HCT116 (cell line): ENCODE measurements at regions of chr7 and their contacts with region 1.

Region 1: GRCh38 chr7:134089446-134089845 is 37.7 kb upstream of the LRGUK start:
- DNase-seq: no peak
- ATAC-seq: no peak
- H3K4me3 ChIP-seq: no peak overlapping the region
- H3K27ac ChIP-seq: no peak overlapping the region
- H3K4me1 ChIP-seq: no peaks in the 10 kb centered on the region
- H3K27me3 ChIP-seq: no peaks in the 10 kb centered on the region
- CTCF ChIP-seq: no peak
- POLR2A ChIP-seq: no peak
- RAD21 ChIP-seq: no peak

Region 2: GRCh38 chr7:134071355-134072331 is 17.8 kb before region 1 on chr7:
- CTCF ChIA-PET with region 1: no interaction called
- POLR2A ChIA-PET with region 1: no interaction called
- RAD21 ChIA-PET with region 1: no interaction called
- intact Hi-C with region 1: no loop called
- DNase-seq: no peak
- ATAC-seq: no peak
- H3K4me3 ChIP-seq: no peak overlapping the region
- H3K27ac ChIP-seq: no peak overlapping the region
- H3K4me1 ChIP-seq: no peaks in the 10 kb centered on the region
- H3K27me3 ChIP-seq: no peaks in the 10 kb centered on the region
- CTCF ChIP-seq: no peak
- POLR2A ChIP-seq: no peak
- RAD21 ChIP-seq: no peak

Region 3: DNA sequence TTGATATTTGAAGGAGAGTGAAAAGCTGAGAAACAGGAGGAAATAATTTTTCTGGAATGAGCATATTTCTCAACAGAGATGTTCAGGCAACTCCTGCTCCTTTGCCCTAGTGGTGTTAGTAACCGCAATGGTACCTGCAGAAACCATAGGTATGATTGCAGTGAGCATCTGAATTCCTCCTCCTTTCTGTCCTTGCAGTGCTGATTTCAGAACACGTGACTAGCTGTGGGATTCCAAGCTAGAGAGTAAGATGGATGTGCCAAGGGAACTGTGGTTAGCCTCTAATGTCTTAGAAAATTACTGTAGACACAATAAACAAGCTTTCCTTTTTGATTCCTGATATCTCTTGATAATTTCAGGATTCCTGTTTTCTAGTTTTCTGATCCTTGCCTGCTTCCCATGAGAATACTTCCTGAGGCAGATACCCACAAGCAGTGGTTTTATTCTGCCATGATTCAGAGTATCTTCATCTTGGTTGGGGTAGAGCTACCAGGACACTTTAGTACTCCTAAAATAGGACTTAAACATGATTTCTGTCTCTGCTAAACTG is 65.2 kb after region 1 on chr7:
- CTCF ChIA-PET with region 1: no interaction called
- POLR2A ChIA-PET with region 1: no interaction called
- RAD21 ChIA-PET with region 1: no interaction called
- intact Hi-C with region 1: loop called (anchors 1 kb)
- DNase-seq: no peak
- ATAC-seq: no peak
- H3K4me3 ChIP-seq: no peak overlapping the region
- H3K27ac ChIP-seq: no peak overlapping the region
- H3K4me1 ChIP-seq: no peaks in the 10 kb centered on the region
- H3K27me3 ChIP-seq: no peaks in the 10 kb centered on the region
- CTCF ChIP-seq: no peak
- POLR2A ChIP-seq: no peak
- RAD21 ChIP-seq: no peak

Region 4: DNA sequence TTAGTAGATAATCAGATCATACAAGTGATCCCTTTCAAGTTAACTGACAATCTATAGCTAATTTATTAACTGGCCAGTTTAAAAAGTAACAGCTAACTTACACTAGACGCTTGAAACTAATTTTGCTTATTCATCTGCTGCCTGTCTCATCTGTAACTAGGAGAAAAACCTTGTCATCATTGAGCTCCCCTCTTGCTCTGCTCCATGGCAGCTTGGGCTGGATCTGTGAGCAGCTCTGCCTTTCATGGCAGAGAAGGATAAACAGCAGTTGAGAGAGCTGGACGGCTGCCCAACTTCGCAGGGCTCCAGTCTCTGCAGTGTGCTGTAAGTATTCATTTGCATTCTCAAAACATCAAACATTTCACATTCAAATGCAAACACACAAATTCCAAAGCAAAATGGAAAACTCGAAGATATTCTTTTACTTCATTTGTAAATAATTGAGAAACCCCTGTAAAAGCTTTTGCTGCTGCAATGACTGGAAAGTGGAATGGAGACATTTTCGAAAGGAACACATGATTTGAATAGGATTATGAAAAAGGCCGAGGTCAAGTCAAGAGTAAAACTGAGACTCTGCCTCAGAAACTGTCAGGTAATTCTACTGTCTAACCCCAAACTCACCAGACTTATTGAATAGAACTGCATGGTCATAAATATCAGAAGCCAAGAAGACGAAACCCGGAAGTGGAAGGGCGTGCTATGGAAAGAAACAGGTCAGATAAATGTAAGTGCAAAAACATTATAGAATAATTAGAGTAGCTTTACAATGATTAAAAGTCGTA is 209.6 kb after region 1 on chr7:
- CTCF ChIA-PET with region 1: no interaction called
- POLR2A ChIA-PET with region 1: no interaction called
- RAD21 ChIA-PET with region 1: no interaction called
- intact Hi-C with region 1: no loop called
- DNase-seq: no peak
- ATAC-seq: no peak
- H3K4me3 ChIP-seq: no peak overlapping the region
- H3K27ac ChIP-seq: no peak overlapping the region
- H3K4me1 ChIP-seq: no peaks in the 10 kb centered on the region
- H3K27me3 ChIP-seq: no peaks in the 10 kb centered on the region
- CTCF ChIP-seq: no peak
- POLR2A ChIP-seq: no peak
- RAD21 ChIP-seq: no peak